ENCODE measurements at regions of chr18 and their contacts with region 1.

Region 1: GRCh38 chr18:63741769-63742168 is 33.4 kb upstream of the SERPINB7 start:
- DNase-seq: no peak
- H3K4me3 ChIP-seq: no peak overlapping the region
- CTCF ChIP-seq: peak; percentile 55

Region 2: GRCh38 chr18:63518178-63519012 is 223.4 kb before region 1 on chr18:
- CTCF ChIA-PET with region 1: interaction called, 499 read pairs
- POLR2A ChIA-PET with region 1: no interaction called
- DNase-seq: peak; percentile 36
- H3K4me3 ChIP-seq: no peak overlapping the region
- CTCF ChIP-seq: peak; percentile 59

Region 3: DNA sequence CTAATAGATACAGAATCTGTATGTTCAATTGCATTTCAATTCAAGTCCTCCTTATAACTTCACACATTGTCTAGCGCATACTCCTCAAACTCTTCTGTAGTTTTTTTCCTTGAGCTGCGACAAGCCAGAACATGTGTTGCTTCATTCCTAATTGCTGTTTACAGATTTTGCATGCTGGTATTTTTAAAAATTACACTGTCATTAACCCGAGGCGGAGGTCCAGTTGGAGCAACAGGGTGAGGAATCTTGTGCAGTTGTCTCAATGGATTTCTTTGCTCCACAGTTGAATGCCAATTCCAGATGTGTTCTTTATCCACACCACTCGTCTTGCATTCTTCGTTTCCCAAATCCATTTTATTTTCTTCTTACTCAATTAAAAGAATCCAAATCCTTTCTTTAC is 171.1 kb before region 1 on chr18:
- CTCF ChIA-PET with region 1: interaction called, 195 read pairs
- POLR2A ChIA-PET with region 1: no interaction called
- DNase-seq: no peak
- H3K4me3 ChIP-seq: no peak overlapping the region
- CTCF ChIP-seq: no peak

Region 4: DNA sequence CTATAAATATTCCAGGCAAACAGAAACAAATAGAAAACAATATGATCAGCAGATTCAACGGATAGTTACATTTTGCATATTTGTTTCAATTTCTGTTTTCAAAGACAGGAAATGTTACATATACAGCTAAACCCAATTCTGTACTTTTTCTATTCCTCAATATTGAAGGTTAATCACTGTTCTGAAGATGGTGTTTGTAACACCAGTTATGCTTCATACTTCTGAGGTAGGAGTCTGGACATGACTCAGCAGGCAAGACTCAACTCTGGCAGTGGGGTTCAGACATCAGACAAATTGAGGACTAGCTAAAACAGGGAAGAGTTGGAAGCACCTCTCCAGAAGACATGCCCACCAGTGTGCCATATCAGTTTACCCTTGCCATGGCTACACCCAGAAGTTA is 138.0 kb before region 1 on chr18:
- CTCF ChIA-PET with region 1: interaction called, 12 read pairs
- POLR2A ChIA-PET with region 1: no interaction called
- DNase-seq: peak; percentile 21
- H3K4me3 ChIP-seq: no peak overlapping the region
- CTCF ChIP-seq: no peak

Region 5: GRCh38 chr18:63758615-63759240 is 17.0 kb after region 1 on chr18:
- CTCF ChIA-PET with region 1: interaction called, 17 read pairs
- POLR2A ChIA-PET with region 1: no interaction called
- DNase-seq: no peak
- H3K4me3 ChIP-seq: no peak overlapping the region
- CTCF ChIP-seq: no peak

Region 6: DNA sequence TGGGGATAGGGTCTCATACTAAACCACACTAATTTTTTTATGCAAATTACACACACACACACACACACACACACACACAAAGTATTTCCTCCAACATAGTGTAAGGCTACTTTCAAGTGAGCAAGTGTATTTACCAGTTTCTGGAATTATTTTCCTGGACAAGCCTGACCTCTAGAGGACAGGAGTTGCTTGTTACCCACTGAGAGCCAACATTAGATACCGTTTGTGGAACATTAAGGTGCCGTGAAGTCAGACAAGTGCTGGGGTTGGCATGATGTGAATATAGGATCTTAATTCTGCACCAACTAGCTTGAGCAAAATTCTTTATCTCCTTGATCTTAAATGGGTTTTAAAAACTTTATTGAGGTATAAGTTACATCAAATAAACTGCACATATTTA is 106.4 kb after region 1 on chr18:
- CTCF ChIA-PET with region 1: interaction called, 127 read pairs
- POLR2A ChIA-PET with region 1: no interaction called
- DNase-seq: no peak
- H3K4me3 ChIP-seq: no peak overlapping the region
- CTCF ChIP-seq: peak; percentile 57

Measured in AG04449 (cell line).